ENCODE measurements at regions of chr14 and their contacts with region 1.

Region 1: DNA sequence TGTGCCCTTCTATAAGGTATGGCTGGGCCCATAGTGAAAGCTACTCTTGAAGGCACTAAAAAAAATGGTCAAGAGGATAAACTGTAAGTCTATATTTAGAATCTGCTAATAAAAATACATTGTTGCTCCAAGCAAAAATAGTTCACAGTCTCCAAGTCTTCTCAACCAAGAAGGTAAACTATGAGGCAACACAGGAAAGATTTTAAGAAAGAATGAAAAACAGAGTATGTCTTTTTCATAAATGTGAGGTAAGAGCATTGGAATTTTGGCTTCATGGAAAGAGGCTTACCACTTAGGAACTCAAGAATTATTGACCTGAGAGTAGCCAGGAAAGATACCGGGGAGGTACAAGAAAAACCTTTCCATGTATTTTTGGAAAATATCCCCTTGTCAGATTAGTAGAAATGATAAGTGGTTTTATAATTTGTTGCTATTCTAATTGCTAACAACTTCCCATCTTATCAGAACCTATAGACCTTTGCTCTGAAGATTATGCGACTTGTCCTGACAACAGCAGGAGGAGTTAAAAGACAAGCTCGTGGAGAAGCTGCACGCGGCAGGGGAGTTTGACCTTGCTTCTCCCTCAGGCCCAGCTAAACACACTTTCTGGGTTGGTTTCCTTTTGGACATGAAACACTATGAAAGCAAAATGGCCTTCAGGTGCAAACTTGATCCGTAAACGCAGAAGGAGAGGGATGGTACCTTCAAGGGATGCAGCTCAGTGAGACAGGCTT is 238.1 kb downstream of the FOXN3 start:
- DNase-seq: no peak
- ATAC-seq: no peak
- H3K4me3 ChIP-seq: no peak overlapping the region
- H3K27ac ChIP-seq: no peak overlapping the region
- H3K4me1 ChIP-seq: peaks cover 3 to 5% of the 10 kb centered on the region in 2 experiments; a peak in 3 of 4 replicates
- H3K27me3 ChIP-seq: no peaks in the 10 kb centered on the region
- CTCF ChIP-seq: no peak
- POLR2A ChIP-seq: no peak
- RAD21 ChIP-seq: no peak

Region 2: DNA sequence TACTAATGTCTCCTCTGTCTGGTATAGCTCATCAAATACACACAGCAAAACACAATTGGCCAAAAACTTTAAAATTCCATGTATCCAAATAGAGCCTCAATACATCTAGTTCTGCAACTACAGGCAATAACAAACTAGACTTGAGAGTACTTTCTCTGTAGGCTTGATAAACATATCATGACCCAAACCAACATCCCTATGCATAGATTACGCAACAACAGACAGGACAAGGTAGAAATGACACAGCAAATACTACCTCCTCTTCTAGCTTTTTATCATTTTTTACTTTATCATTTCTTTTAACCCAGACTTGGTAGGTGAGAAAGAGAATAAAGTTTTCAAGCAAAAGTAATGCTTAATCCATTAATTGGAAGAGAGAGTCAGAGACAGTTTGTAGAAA is 428.0 kb before region 1 on chr14:
- CTCF ChIA-PET with region 1: no interaction called
- POLR2A ChIA-PET with region 1: no interaction called
- RAD21 ChIA-PET with region 1: no interaction called
- intact Hi-C with region 1: no loop called
- DNase-seq: no peak
- ATAC-seq: no peak
- H3K4me3 ChIP-seq: no peak overlapping the region
- H3K27ac ChIP-seq: no peak overlapping the region
- H3K4me1 ChIP-seq: no peaks in the 10 kb centered on the region
- H3K27me3 ChIP-seq: no peaks in the 10 kb centered on the region
- CTCF ChIP-seq: no peak
- POLR2A ChIP-seq: no peak
- RAD21 ChIP-seq: no peak

Region 3: DNA sequence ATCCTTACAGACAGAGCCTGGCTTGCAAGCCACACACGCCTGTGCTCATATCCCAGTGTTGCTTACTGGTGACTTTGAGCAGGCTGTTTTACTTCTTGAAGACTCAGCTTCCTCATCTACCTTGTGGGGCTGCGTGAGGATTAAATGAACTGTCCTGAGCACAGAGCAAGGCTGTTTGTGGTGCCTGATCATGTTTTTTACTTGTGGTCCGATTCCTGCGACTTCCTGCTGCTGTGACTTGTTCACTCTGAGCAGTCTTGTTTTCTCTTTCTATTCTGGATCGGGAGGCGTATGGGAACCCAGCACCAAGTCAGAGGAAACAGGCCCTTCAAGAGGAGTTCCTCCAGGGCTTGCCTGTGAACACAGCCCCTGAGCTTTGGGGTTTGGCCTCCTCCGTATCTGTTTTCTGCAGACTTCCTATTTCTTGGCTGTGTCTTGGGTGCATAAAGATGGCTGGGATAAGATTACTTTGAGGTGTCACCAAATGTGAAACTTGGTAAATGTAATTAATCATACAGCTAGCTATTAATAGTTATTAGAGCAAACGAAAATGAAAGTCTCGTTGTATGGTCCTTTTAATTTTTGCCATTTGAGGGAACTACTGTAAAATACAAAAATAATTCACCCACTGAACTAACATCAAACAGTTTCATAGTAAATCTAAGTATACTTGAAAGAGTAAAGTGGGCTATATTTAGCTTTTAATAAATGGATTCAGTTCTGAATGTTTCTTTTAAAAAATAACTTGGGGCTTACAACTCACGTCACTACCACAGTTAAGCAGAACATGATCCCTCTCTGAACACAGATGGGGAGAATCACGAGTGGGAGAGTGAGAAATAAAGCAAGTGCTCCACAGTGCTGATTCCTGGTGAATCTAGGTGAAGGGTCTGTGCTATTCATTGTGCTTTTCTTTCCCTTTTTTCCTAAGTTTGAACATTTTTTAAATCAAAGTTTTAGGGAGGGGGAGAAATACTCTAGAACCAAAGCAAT is 13.5 kb before region 1 on chr14:
- CTCF ChIA-PET with region 1: no interaction called
- POLR2A ChIA-PET with region 1: no interaction called
- RAD21 ChIA-PET with region 1: no interaction called
- intact Hi-C with region 1: no loop called
- DNase-seq: no peak
- ATAC-seq: no peak
- H3K4me3 ChIP-seq: no peak overlapping the region
- H3K27ac ChIP-seq: no peak overlapping the region
- H3K4me1 ChIP-seq: no peaks in the 10 kb centered on the region
- H3K27me3 ChIP-seq: no peaks in the 10 kb centered on the region
- CTCF ChIP-seq: no peak
- POLR2A ChIP-seq: no peak
- RAD21 ChIP-seq: no peak

Region 4: DNA sequence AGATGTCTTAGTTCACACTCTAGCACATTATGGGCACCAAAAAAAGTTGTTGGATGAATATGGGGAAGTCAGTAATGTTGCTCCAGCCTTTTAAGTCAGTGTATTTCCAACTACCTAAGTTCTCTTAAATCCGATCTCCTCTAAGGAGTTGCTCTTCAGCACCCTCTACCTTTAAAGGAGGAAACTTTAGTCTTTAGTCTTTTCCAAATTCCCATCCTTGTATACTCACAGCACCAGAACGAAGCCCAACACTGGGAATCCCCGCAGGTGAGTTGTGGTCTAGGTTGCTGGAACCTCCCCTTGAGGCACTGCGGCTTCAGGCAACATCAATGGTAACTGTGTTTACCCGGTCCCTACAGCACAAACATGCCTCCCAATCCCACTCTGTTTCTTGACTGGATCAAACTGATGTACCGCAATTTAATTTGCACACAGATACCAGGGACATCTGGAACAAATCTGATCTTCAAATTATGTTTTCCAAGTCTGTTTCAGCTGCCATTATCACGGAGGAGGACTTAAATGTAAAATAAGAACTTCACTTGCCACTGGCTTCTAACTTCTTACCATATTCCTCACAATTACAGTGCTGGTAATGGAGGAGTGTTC is 59.1 kb after region 1 on chr14:
- CTCF ChIA-PET with region 1: no interaction called
- POLR2A ChIA-PET with region 1: no interaction called
- RAD21 ChIA-PET with region 1: no interaction called
- intact Hi-C with region 1: loop called (anchors 5 kb)
- DNase-seq: no peak
- ATAC-seq: peak; percentile 73
- H3K4me3 ChIP-seq: no peak overlapping the region
- H3K27ac ChIP-seq: no peak overlapping the region
- H3K4me1 ChIP-seq: no peaks in the 10 kb centered on the region
- H3K27me3 ChIP-seq: no peaks in the 10 kb centered on the region
- CTCF ChIP-seq: peak; percentile 23 to 46 (median 41); a peak in 4 of 6 replicates
- POLR2A ChIP-seq: no peak
- RAD21 ChIP-seq: peak; percentile 52

Region 5: GRCh38 chr14:89416002-89416995 is 237.3 kb after region 1 on chr14:
- CTCF ChIA-PET with region 1: no interaction called
- POLR2A ChIA-PET with region 1: no interaction called
- RAD21 ChIA-PET with region 1: no interaction called
- intact Hi-C with region 1: loop called (anchors 5 kb)
- DNase-seq: peak; percentile 94
- ATAC-seq: peak; percentile 77
- H3K4me3 ChIP-seq: peak overlapping the region; percentile 78 to 82
- H3K27ac ChIP-seq: peak overlapping the region; percentile 72; the same call in 1 of the 2 replicates
- H3K4me1 ChIP-seq: peaks cover 4 to 22% of the 10 kb centered on the region in 2 experiments; a peak in 3 of 4 replicates
- H3K27me3 ChIP-seq: no peaks in the 10 kb centered on the region
- CTCF ChIP-seq: no peak
- POLR2A ChIP-seq: no peak
- RAD21 ChIP-seq: no peak

Region 6: DNA sequence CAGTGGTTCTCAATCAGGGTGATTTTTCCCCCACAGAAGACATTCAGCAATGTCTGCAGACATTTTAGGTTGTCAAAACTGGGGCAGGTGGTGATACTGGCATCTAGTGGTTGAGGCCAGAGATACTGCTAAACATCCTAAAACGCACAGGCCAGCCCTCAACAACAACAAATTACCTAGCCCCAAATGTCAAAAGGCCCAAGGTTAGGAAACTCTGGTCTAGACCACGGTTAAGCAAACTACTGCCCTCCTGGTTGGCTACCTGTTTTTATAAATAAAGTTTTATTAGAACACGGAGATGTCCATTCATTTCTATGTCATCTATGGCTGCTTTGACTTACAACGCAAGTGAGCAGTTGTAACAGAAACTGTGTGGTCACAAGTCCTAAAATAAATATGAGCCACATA is 588.9 kb after region 1 on chr14:
- CTCF ChIA-PET with region 1: interaction called, 6 read pairs
- POLR2A ChIA-PET with region 1: no interaction called
- RAD21 ChIA-PET with region 1: no interaction called
- intact Hi-C with region 1: loop called (anchors 1 kb)
- DNase-seq: peak; percentile 43
- ATAC-seq: peak; percentile 92
- H3K4me3 ChIP-seq: no peak overlapping the region
- H3K27ac ChIP-seq: no peak overlapping the region
- H3K4me1 ChIP-seq: no peaks in the 10 kb centered on the region
- H3K27me3 ChIP-seq: peaks cover 9% of the 10 kb centered on the region; the same call in 1 of the 2 replicates
- CTCF ChIP-seq: peak; percentile 57 to 82 (median 75); a peak in 5 of 6 replicates
- POLR2A ChIP-seq: no peak
- RAD21 ChIP-seq: peak; percentile 87

Region 7: DNA sequence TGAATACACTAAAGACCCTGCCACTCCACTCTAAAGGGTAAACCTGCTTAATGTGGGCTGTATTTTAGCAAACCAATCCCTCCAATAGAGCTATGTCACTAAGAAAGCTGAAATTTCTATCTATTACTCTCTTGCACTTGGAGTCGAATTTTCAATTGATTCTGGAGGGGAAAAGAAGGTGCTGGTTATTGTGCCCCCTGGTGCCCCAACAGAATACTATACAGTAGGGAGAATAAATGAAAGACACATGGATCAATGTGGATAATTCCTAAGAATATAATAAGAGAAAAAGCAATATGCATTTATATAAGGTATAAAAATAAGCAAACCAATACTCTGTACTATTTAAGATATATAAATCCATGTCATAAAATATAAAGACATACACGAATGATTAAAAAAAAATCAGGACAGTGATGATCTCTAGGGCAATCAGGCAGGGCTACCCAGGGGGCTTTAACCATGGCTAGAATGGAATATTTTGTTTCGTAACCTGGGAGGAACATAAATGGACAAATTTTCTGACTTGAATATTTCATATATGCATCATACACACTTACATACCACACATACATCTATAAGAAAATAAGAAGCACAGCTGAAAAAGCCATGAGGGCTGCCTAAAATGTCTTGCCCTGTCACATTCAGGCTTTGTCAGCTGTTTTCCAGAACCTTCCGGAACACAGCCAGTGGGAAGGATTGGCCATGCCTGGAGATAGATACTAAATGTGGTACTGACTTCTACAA is 721.1 kb after region 1 on chr14:
- CTCF ChIA-PET with region 1: no interaction called
- POLR2A ChIA-PET with region 1: no interaction called
- RAD21 ChIA-PET with region 1: no interaction called
- intact Hi-C with region 1: loop called (anchors 5 kb)
- DNase-seq: peak; percentile 13
- ATAC-seq: peak; percentile 85
- H3K4me3 ChIP-seq: no peak overlapping the region
- H3K27ac ChIP-seq: no peak overlapping the region
- H3K4me1 ChIP-seq: no peaks in the 10 kb centered on the region
- H3K27me3 ChIP-seq: no peaks in the 10 kb centered on the region
- CTCF ChIP-seq: peak; percentile 40 to 73 (median 56); a peak in 4 of 6 replicates
- POLR2A ChIP-seq: no peak
- RAD21 ChIP-seq: peak; percentile 61

Region 8: GRCh38 chr14:89915114-89915878 is 736.3 kb after region 1 on chr14:
- CTCF ChIA-PET with region 1: no interaction called
- POLR2A ChIA-PET with region 1: no interaction called
- RAD21 ChIA-PET with region 1: no interaction called
- intact Hi-C with region 1: loop called (anchors 2 kb)
- DNase-seq: peak; percentile 57
- ATAC-seq: peak; percentile 68; the same call in 1 of the 2 replicates
- H3K4me3 ChIP-seq: no peak overlapping the region
- H3K27ac ChIP-seq: no peak overlapping the region
- H3K4me1 ChIP-seq: no peaks in the 10 kb centered on the region
- H3K27me3 ChIP-seq: no peaks in the 10 kb centered on the region
- CTCF ChIP-seq: peak; percentile 65 to 95 (median 90); a peak in 5 of 6 replicates
- POLR2A ChIP-seq: no peak
- RAD21 ChIP-seq: peak; percentile 82

Measured in HCT116 (cell line).